Head of caudate nucleus (tissue), 42 donors: ENCODE measurements at regions of chr3 and their contacts with region 1.

Region 1: DNA sequence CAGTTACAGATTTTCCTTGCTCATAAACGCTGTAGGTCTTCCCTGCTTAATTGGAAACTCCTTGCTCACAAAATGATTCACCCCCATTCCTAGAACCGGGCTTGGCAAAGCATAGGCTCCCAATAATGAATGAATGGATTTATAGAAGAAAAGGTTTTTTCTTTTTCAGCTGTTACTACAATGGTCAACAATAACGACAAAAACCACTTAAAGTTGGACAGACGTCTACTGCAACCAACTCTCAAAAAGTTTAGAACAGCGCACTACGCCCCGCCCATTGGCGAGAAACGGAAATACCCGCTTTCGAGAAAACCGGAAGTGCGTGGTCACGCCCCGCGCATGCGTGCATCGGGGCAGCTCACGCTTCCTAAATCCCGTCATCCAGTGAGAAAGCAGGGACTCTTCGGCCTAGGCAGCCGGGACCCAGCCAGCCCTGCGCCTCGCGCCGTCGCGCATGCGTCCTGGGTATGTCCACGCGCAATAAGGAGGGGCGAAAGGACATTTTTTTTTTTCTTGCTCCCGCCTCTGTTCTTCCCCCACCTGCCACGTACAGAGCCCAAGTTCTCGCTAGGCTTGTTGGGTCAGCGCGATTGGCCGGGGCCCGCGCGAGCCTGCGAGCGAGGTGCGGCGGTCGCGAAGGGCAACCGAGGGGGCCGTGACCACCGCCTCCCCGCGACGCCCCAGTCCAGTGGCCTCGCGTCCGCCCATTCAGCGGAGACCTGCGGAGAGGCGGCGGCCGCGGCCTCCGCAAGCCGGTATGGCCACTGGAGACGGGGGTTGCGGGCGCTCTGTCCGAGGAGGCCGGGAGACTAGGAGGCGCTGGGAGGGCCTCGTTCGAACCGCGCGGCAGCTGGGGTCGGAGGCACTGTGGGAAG is at the start of gene TFG:
- DNase-seq: peak; percentile 87 to 98 (median 96)

Region 2: GRCh38 chr3:100360757-100361496 is 348.3 kb before region 1 on chr3:
- intact Hi-C with region 1: no loop called
- DNase-seq: no peak

Region 3: GRCh38 chr3:100400780-100401673 is 308.2 kb before region 1 on chr3 and contains the starts of genes LNP1 and TOMM70:
- intact Hi-C with region 1: loop called (anchors 5 kb)
- DNase-seq: peak; percentile 95 to 99 (median 98)

Region 4: GRCh38 chr3:100537622-100538338 is 171.4 kb before region 1 on chr3:
- intact Hi-C with region 1: no loop called
- DNase-seq: no peak

Region 5: DNA sequence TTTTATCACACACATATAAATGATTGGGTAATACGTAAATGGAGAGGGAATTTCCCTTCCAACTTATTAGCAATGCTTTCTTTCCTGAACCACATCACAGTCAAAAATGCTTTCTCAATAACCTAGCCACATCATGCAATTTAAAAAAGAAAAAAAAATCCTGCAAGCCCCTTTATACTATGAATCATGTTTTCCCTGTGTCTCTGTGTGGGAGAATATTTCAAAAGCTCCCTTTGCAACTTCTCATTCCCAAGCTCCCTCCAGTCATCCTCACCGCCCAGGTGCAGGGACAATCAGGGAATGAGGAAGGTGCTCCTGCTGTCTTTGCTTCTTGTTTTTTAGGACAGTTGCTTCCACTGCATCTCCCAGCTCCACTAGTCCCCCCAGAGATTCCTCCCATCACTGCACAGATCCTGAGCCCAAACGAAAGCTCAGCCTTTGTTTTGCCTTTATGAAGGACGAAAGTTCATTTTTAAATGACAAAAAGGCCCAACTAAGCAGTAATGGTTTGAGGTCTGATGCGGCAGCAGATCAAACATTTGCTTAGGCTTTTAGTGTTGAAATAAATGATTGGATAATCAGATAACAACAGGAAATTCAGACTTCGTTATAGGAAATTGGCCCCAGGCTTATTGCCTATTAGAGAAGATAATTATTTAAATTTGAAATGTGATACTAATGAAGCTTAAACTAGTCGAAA is 147.6 kb before region 1 on chr3:
- intact Hi-C with region 1: no loop called
- DNase-seq: peak in 9 of 42 donors; percentile 4 to 27 (median 18)